ENCODE measurements at regions of chr10 and their contacts with region 1.

Region 1: DNA sequence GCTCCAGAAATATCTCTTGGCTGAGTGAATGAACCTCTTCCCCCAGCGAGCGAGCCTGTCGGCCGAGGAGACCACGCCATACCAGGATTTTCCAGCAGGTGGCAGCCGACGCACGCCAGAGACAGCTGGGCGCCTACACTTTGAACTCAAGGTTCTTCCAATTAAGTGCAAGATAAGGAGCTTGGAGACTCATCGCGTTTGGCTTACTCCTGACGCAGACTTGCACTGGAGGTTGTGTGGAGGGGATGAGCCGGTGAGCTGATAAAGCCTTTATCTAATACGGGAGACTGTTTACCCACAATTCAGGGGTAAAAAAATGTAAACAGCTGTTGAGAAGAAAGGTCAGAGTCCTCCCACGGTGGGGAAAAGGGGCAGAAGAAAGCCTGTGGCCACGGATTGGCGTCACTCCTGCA is 45.9 kb upstream of the EMX2 start:
- DNase-seq: peak; percentile 88
- ATAC-seq: peak; percentile 89

Region 2: DNA sequence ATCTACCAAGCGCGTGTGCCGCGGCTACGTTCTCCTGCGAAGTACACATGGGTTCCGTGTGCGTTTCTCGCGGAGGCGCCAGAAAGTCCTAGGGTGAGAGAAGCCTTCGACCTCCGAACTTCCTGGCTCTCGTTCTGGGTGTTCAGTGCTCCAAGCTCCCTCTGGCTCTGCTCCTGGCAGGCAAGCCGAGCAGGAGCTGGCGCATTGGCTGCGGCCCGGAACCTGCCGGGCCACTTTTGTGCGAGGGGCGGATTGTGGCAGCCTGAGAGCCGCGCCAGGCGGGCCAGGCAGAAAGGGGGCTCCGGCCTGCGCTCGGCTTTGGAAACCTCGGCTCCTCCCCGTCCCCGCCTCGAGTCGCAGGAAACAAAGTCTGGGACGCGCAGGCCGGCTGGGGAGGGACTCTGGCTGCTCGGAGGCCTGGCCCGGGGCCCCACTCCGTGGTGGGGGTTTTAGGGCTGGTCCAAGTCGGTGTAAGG is 55.6 kb after region 1 on chr10:
- intact Hi-C with region 1: no loop called
- DNase-seq: no peak
- ATAC-seq: peak; percentile 39

Region 3: DNA sequence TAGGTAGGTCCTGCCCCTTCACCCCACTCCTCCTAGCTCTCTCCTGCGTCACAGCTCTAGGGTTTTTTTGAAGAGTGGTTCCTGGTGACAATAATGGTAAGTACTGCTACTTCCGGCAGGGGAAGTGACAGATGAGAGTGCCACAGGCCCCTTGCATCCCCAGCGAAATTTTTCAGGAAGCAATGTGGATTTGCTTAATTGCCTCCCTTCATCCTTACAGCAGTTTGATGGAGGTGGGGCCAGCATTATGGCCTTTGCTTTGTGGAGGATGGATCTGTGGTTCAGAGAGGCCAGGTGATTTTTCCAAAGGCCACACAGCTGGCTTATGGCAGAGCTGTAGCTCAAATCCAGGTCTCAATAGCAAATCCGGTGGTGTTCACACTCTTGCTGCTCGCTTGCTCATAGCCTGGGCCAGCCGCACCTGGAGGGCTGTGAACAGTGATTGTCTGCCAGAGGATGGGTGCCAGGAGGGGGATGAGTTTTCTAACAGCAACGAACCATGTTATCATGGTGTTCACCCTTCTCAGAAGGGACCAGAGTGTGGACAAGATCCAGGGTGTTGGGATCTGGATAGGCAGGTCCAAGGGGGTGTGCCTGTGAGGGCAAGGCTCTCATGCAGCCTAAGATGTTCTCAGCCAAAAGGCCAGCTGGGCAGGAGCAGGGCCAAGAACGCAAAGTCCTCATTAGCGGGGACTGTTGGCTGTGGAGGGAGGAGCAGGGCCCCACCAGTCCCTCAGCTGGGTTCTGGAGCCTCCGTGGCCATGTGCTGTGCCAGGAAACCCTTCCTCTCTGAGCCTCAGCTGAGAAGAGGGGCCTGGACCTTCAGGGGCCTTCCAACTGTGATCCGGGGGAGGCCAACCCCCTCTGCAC is 134.9 kb after region 1 on chr10:
- intact Hi-C with region 1: no loop called
- DNase-seq: no peak
- ATAC-seq: peak; percentile 70

Region 4: GRCh38 chr10:118241229-118242137 is 744.9 kb after region 1 on chr10:
- intact Hi-C with region 1: loop called (anchors 2 kb)
- DNase-seq: peak; percentile 90
- ATAC-seq: peak; percentile 78

Region 5: DNA sequence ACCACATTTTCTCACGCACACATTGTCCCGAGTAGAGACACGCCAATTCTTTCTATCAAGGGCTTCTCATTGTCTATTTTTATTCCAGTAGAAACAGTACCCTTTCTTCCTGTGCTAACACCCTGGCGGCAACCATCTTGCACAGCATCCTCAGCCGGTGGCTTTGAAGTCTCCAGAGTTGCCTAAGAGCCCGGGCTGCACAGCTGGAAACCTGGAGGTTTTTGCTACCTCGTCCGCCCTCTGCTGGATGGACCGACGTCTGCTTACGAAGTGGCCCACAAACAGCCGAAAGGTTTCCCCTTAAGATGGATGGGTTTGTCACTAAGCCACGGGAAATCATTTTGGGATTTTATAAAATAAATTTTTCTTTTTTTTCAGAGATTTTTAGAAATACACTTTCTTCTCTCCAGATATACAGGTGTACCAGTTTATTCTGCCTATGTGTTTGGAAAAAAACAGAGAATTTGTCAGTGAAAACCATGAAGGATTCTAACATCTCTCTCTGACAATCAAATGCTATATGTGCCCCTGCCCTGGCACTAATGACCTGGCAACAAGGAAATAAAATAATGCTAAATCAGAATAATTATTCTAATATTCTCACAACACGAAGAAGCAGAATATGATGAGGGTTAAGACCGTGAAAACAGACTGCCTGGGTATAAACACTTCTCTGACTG is 927.3 kb after region 1 on chr10:
- intact Hi-C with region 1: loop called (anchors 10 kb)
- DNase-seq: peak; percentile 86
- ATAC-seq: peak; percentile 92

Measured in sciatic nerve (tissue), 2 donors.